ENCODE measurements at regions of chr15 and their contacts with region 1.

Region 1: DNA sequence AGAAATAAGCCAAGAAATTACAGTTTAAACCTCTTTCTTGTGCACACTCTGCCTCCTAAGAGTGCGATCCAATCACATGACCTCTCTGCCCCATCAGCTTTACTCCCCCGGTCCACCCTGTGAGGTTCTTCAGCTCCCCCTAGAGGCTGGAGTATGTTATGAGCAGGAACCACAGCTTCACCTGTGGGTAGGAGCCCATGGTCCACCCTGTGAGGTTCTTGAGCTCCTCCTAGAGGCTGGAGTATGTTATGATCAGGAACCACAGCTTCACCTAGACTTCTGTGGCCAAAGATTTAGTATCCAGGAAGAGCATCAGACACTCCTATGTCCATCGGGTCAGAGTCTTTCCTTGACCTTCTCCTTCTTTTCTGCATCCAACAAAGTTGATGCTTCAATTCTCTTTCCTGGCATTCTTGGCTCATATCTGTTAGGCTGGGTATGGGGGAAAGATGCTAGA is 163.9 kb downstream of the MINAR1 start:
- DNase-seq: peak; percentile 51
- H3K4me3 Mint-ChIP-seq: no peak overlapping the region
- H3K27ac Mint-ChIP-seq: no peak overlapping the region
- H3K4me1 Mint-ChIP-seq: no peaks in the 10 kb centered on the region
- H3K27me3 Mint-ChIP-seq: peaks cover 9% of the 10 kb centered on the region

Region 2: DNA sequence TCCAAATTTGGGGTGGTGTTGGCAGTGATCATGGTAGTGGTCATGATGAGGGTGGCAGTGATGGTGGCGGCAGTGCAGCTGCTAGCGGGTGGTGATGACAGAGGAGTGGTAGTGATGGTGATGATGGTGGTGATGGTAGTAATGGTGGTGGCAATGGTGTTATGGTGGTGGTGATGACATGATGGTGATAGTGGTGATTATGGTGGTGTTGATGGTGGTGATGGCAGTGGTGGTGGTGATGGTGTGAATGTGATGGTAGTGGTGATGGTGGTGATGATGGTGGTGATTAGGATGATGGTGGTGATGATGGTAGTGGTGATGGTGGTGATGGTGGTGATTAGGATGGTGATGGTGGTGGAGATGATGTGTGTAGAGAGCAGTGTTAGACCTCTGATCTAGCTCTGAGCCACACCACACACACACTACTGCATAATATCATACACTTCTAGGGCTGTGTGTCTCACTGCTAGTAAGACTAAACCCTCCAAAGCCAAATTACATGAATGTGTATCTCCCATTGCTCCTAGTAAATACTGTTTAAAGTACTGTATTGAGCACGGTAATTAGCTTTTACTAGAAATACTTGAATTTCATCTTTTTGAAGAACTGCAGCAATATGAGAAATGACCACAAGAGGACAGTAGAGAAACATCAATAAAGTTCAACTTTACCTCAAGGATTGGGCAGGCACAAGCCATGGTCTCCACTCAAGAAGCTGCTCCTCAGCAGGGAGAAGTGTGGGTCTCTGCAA is 256.3 kb before region 1 on chr15:
- intact Hi-C with region 1: loop called (anchors 1 kb)
- DNase-seq: no peak
- H3K4me3 Mint-ChIP-seq: no peak overlapping the region
- H3K27ac Mint-ChIP-seq: no peak overlapping the region
- H3K4me1 Mint-ChIP-seq: no peaks in the 10 kb centered on the region
- H3K27me3 Mint-ChIP-seq: no peaks in the 10 kb centered on the region

Region 3: DNA sequence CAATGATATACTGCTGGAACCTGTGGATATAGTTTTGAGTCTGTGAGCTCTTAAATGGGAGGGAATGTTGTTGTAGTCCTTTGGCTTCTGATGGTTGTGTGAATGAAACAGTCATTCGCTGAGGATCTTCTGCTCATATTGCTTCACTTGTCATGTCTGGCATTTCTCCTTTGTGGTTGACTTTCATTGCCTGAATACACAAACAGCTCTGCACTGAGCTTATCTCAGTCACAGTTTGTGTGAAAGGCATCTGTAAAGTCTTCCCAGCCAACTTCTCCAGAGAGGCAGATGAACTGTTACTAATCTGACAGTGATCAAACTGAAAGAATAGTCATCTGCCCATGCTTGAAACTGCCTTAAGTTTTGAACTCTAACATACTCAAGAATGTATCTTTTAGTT is 225.4 kb before region 1 on chr15:
- intact Hi-C with region 1: no loop called
- DNase-seq: no peak
- H3K4me3 Mint-ChIP-seq: no peak overlapping the region
- H3K27ac Mint-ChIP-seq: no peak overlapping the region
- H3K4me1 Mint-ChIP-seq: no peaks in the 10 kb centered on the region
- H3K27me3 Mint-ChIP-seq: no peaks in the 10 kb centered on the region

Region 4: GRCh38 chr15:79513940-79514339 is 82.1 kb before region 1 on chr15:
- intact Hi-C with region 1: loop called (anchors 2 kb)
- DNase-seq: no peak
- H3K4me3 Mint-ChIP-seq: no peak overlapping the region
- H3K27ac Mint-ChIP-seq: no peak overlapping the region
- H3K4me1 Mint-ChIP-seq: no peaks in the 10 kb centered on the region
- H3K27me3 Mint-ChIP-seq: peaks cover 11% of the 10 kb centered on the region

Region 5: DNA sequence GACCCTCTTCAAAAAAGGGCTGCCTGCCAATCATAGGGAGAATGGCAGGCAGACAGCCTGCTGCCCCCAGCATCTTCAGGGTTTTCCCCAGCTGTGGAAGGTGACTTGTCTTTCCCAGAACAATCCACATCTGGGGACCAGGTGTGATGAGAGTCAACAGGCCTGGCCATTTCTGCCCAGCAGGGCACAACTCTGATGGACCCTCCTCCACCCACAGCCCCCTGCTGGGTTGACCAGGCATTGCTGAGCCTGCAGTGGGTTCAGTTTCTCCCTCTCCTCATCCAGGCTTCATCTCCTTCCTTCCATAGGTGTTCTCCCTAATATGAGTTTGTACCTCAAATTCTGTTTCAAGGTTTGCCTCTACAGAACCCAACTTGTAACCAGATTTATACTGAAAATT is 53.0 kb before region 1 on chr15:
- intact Hi-C with region 1: no loop called
- DNase-seq: no peak
- H3K4me3 Mint-ChIP-seq: no peak overlapping the region
- H3K27ac Mint-ChIP-seq: no peak overlapping the region
- H3K4me1 Mint-ChIP-seq: no peaks in the 10 kb centered on the region
- H3K27me3 Mint-ChIP-seq: peaks cover 2% of the 10 kb centered on the region

Region 6: GRCh38 chr15:79560384-79560783 is 35.7 kb before region 1 on chr15:
- intact Hi-C with region 1: no loop called
- DNase-seq: no peak
- H3K4me3 Mint-ChIP-seq: no peak overlapping the region
- H3K27ac Mint-ChIP-seq: no peak overlapping the region
- H3K4me1 Mint-ChIP-seq: no peaks in the 10 kb centered on the region
- H3K27me3 Mint-ChIP-seq: peaks cover 10% of the 10 kb centered on the region

Measured in activated T-helper 1 cell treated with anti-CD3 and anti-CD28 coated beads, Interleukin-12 subunit alpha, Interleukin-12 subunit beta, Interleukin-2, Interleukin-4 antibody, amounts not matched to agents 30 ng/mL and 10 ng/mL and 1 ng/mL, durations not matched to agents 14 hours and 24 hours and 36 hours (primary cell).